ENCODE measurements at regions of chr2 and their contacts with region 1.

Region 1: DNA sequence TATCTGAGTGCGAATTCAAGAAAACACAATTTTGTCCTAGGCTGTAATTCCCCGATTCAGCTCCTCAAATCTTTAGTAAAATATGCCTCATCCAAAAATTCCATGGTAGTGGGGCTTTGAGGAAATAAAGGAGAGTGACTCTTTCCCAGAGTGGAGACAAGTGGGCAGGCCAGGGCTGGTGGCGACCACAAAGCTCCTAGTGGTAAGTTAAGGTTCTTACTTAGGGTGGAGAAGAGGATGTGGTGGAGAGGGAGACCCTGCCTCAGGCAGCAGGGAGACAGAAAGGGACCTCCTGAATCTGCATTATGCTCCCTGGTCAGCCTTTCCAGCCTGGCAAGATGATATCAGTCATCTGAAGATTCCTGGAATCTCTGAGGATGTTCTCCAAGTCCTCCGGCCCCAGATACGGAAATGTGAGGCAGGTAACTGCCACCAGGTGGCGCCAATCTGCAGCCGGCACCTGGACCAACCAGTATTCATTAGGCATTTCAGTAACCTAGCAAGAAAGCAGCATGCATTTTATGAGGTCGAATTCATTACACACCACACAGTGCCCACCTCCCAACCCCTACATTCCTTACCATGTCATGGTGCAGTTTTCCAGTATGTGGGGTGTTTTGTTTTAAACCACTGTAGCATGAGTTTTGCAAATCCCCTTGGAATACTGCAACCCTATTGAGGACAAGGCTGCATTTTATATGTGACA is 106.4 kb downstream of the POLE4 start:
- DNase-seq: no peak
- ATAC-seq: peak; percentile 78
- H3K4me3 ChIP-seq: no peak overlapping the region
- H3K27ac ChIP-seq: no peak overlapping the region
- H3K4me1 ChIP-seq: no peaks in the 10 kb centered on the region
- H3K27me3 ChIP-seq: no peaks in the 10 kb centered on the region
- CTCF ChIP-seq: peak; percentile 93

Region 2: DNA sequence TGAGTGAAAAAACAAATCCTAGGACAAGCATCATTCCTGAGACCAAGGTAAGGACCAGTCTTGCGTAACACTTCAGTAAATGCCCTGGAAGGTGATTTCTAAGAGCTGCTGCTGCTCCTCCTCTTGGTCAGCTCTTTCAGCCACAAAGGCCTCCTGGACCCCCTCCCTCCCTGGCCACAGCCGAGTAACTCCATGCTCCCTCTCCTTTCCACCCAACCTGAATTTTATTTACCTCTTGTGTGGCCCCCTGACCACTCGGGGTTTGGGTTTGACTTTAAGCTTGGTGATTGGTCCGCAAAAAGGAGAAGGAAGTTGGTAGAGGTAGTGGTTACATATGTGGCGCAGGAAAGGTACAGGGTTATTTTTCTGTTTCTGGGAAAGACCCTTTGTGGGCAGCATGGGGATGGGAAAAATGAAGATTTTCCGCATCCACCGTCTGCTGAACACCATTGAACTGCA is 525.9 kb before region 1 on chr2:
- CTCF ChIA-PET with region 1: no interaction called
- POLR2A ChIA-PET with region 1: no interaction called
- in situ Hi-C with region 1: no loop called
- intact Hi-C with region 1: no loop called
- DNase-seq: no peak
- ATAC-seq: no peak
- H3K4me3 ChIP-seq: no peak overlapping the region
- H3K27ac ChIP-seq: no peak overlapping the region
- H3K4me1 ChIP-seq: no peaks in the 10 kb centered on the region
- H3K27me3 ChIP-seq: no peaks in the 10 kb centered on the region; the same call in 1 of the 2 replicates
- CTCF ChIP-seq: no peak

Region 3: DNA sequence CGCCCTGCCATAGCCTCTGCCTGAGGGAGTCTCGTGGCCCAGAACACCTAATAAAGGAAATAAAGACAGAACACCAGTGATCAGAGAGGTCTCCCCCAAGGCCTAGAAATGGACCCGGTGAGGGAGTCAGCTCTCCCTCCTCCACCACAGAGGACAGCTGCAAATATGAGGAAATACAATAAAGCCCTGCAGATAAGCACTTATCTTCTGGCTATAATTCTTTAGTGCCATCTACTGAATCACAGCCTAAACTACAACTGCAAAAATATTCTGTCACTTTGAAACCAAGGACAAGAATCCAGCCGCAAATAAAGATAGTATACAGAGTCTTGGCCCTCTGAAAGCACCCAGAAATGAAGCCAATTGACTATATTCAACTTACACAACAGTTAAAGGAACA is 176.9 kb after region 1 on chr2:
- CTCF ChIA-PET with region 1: no interaction called
- POLR2A ChIA-PET with region 1: no interaction called
- in situ Hi-C with region 1: no loop called
- intact Hi-C with region 1: loop called (anchors 5 kb)
- DNase-seq: no peak
- ATAC-seq: no peak
- H3K4me3 ChIP-seq: no peak overlapping the region
- H3K27ac ChIP-seq: no peak overlapping the region
- H3K4me1 ChIP-seq: no peaks in the 10 kb centered on the region
- H3K27me3 ChIP-seq: no peaks in the 10 kb centered on the region; the same call in 1 of the 2 replicates
- CTCF ChIP-seq: peak; percentile 68

Region 4: DNA sequence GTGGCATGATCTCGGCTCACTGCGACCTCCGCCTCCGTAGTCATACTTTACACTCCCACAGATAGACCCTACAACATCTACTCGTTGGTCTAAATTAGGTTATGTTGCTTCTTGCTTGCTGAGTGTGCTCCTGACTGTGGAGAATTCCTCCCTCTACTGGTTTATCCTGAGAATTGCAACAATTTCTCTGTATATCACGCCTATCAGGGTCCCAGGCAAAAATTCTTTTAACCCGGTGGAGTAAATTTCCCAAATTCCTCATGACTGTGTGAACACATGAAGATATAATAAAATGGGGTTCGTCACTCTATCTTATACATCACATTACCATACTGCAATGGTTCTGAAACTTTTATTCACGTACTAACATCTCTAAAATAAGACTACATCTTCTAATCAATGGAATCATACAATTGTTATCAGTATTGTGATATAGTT is 339.2 kb after region 1 on chr2:
- CTCF ChIA-PET with region 1: no interaction called
- POLR2A ChIA-PET with region 1: no interaction called
- in situ Hi-C with region 1: no loop called
- intact Hi-C with region 1: loop called (anchors 1 kb)
- DNase-seq: peak; percentile 32
- ATAC-seq: peak; percentile 90
- H3K4me3 ChIP-seq: no peak overlapping the region
- H3K27ac ChIP-seq: no peak overlapping the region
- H3K4me1 ChIP-seq: no peaks in the 10 kb centered on the region
- H3K27me3 ChIP-seq: no peaks in the 10 kb centered on the region
- CTCF ChIP-seq: peak; percentile 82

Region 5: GRCh38 chr2:75627895-75628504 is 563.2 kb after region 1 on chr2:
- CTCF ChIA-PET with region 1: no interaction called
- POLR2A ChIA-PET with region 1: no interaction called
- in situ Hi-C with region 1: no loop called
- intact Hi-C with region 1: loop called (anchors 10 kb)
- DNase-seq: peak; percentile 61
- ATAC-seq: peak; percentile 96
- H3K4me3 ChIP-seq: no peak overlapping the region
- H3K27ac ChIP-seq: no peak overlapping the region
- H3K4me1 ChIP-seq: no peaks in the 10 kb centered on the region
- H3K27me3 ChIP-seq: peaks cover 8% of the 10 kb centered on the region
- CTCF ChIP-seq: peak; percentile 93

Measured in Panc1 (cell line).